IMR-90 (cell line): ENCODE measurements at regions of chr10 and their contacts with region 1.

Region 1: DNA sequence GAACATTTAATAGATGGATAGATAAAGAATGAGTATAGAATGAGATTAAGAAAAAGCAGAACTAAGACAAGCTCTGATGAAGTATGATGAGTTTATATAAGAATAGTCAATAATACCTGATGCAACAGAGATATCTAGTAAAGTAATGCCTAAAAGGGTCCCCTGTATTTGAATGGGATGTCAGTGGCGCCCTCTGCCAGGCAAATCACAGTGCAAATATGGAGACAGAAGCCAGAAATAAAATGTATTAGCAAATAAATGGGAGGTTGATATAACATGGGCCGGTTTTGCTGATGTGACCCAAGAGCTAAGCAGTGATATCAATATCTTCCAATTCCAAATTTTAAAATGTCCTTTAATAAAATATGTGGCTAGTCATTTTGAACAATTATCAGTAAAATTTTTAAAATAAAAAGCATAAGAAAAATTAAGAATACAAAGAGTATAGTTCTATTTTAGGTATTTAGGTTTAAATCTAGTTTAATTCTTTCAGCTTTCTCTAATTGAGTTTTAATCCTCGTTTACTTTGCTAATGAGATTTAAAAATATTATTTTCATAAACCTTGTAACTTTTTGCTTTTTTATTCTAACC is 62.6 kb downstream of the ADK start:
- DNase-seq: peak; percentile 51
- ATAC-seq: peak; percentile 77
- H3K4me3 ChIP-seq: no peak overlapping the region
- H3K27ac ChIP-seq: no peak overlapping the region
- H3K4me1 ChIP-seq: no peaks in the 10 kb centered on the region
- H3K27me3 ChIP-seq: no peaks in the 10 kb centered on the region
- CTCF ChIP-seq: peak; percentile 73
- POLR2A ChIP-seq: no peak
- RAD21 ChIP-seq: peak; percentile 70

Region 2: GRCh38 chr10:74120911-74121310 is 92.8 kb before region 1 on chr10:
- CTCF ChIA-PET with region 1: interaction called, 3 read pairs
- POLR2A ChIA-PET with region 1: no interaction called
- dilution Hi-C with region 1: no loop called
- in situ Hi-C with region 1: no loop called
- intact Hi-C with region 1: loop called (anchors 5 kb)
- DNase-seq: no peak
- ATAC-seq: no peak
- H3K4me3 ChIP-seq: no peak overlapping the region
- H3K27ac ChIP-seq: no peak overlapping the region
- H3K4me1 ChIP-seq: peaks cover 10% of the 10 kb centered on the region
- H3K27me3 ChIP-seq: no peaks in the 10 kb centered on the region
- CTCF ChIP-seq: no peak
- POLR2A ChIP-seq: no peak
- RAD21 ChIP-seq: no peak

Region 3: GRCh38 chr10:74255888-74256357 is 42.3 kb after region 1 on chr10:
- CTCF ChIA-PET with region 1: no interaction called
- POLR2A ChIA-PET with region 1: no interaction called
- dilution Hi-C with region 1: no loop called
- in situ Hi-C with region 1: no loop called
- intact Hi-C with region 1: no loop called
- DNase-seq: peak; percentile 18
- ATAC-seq: peak; percentile 46
- H3K4me3 ChIP-seq: no peak overlapping the region
- H3K27ac ChIP-seq: no peak overlapping the region
- H3K4me1 ChIP-seq: peaks cover 4% of the 10 kb centered on the region; the same call in 1 of the 2 replicates
- H3K27me3 ChIP-seq: no peaks in the 10 kb centered on the region
- CTCF ChIP-seq: no peak
- POLR2A ChIP-seq: no peak
- RAD21 ChIP-seq: no peak

Region 4: DNA sequence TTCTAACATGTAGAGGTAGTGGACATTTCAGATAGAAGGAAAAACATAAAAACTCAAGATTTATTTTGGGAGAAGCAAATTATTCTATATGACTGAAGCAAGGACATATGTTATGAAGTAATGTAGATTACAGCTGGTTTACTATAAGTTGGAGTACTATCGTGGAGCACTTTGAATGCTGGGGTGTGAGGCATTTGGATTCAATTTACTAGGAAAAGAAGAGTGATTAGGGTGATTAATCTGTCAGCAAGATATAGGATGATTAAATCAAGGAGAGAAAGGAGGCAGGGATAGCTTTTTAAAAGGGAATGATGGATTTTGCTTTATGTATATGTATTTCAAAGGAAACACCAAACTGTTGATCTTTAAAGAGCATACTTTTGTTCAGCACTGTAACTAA is 294.3 kb after region 1 on chr10:
- CTCF ChIA-PET with region 1: no interaction called
- POLR2A ChIA-PET with region 1: no interaction called
- dilution Hi-C with region 1: no loop called
- in situ Hi-C with region 1: no loop called
- intact Hi-C with region 1: no loop called
- DNase-seq: no peak
- ATAC-seq: no peak
- H3K4me3 ChIP-seq: no peak overlapping the region
- H3K27ac ChIP-seq: no peak overlapping the region
- H3K4me1 ChIP-seq: peaks cover 5% of the 10 kb centered on the region; the same call in 1 of the 2 replicates
- H3K27me3 ChIP-seq: no peaks in the 10 kb centered on the region
- CTCF ChIP-seq: no peak
- POLR2A ChIP-seq: no peak
- RAD21 ChIP-seq: no peak